ENCODE measurements at regions of chr1 and their contacts with region 1.

Region 1: DNA sequence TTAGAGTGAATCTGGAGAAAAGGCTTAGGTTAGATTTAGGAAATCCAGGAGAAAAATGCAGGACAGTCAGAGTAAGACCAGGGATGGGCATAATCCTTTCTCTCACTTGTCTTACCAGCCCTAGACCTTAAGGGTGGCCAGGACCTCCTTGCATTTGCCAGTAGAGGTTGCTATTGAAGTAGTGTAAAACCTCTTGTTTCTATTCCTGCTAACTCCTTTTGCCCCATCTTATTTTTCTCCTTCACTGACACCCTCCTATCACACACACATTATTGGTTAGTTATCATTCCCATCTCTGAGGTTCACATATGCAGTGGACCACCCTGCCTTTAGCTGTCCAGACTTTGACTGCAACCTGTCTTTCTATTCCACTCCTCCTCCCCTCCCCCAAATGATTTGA is 75.0 kb upstream of the MACF1 start:
- DNase-seq: no peak
- H3K4me3 ChIP-seq: no peak overlapping the region
- CTCF ChIP-seq: peak; percentile 41

Region 2: DNA sequence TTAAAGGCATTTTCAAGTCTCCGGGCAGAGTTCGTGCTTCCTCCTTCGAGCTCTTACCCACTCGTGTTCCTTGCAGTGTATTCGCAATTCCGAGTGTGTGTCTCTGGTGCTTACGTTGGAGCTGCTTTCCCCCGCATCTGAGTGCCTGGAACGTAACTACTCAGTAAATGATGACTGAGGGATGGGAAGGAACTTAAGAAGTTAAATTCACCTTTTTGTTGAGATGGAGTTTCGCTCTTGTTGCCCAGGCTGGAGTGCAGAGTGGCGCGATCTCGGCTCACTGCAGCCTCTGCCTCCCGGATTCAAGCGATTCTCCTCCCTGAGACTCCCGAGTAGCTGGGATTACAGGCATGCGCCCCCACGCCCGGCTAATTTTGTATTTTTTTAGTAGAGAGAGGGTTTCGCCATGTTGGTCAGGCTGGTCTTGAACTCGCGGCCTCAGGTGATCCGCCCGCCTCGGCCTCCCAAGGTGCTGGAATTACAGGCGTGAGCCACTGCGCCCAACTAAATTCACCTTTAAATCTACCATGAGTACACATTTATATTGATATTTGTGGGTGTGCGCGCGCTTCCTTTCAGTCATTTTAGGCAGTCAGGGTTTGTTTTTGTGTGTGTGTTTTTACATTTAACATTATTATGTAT is 102.5 kb before region 1 on chr1:
- in situ Hi-C with region 1: no loop called
- DNase-seq: no peak
- H3K4me3 ChIP-seq: peak overlapping the region; percentile 94
- CTCF ChIP-seq: no peak

Region 3: DNA sequence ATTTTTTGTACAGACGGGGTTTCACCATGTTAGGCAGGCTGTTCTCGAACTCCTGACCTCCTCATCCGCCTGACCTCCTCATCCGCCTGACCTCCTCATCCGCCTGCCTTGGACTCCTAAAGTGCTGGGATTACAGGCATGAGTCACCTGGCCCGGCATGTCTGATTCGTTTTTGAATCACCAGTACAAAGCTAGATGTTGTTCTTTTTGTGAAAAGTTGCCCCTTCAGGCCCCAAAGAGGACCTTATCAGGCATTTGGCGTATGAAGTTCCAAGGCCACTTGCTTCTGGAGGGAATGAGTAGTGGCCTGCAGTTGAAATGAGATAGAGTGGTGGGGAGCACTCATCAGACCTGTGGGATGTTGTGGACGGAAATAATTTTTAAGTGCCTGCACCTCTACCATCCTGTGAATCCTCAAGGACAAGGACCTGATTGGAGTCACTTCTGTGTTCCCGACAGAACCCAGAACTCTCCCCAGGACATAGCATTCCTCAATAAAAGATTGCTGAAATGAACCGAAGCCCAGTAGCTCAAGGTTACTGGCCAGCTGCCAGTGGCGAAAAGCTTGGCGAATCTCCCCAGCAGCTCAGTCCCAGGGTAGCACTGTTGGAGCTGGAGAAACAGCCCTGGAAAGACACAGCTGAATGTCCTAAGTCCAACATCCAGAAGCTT is 53.3 kb before region 1 on chr1:
- in situ Hi-C with region 1: loop called (anchors 5 kb)
- DNase-seq: peak; percentile 49
- H3K4me3 ChIP-seq: no peak overlapping the region
- CTCF ChIP-seq: no peak